ENCODE measurements at regions of chr11 and their contacts with region 1.

Region 1: GRCh38 chr11:82959987-82960778 is 58.6 kb downstream of the DDIAS start:
- DNase-seq: peak in 26 of 35 experiments; percentile 23 to 83 (median 45)
- ATAC-seq: peak; percentile 86 to 89 (median 88)
- H3K4me3 ChIP-seq: peak overlapping the region in 1 of 2 donors; percentile 27
- H3K4me3 Mint-ChIP-seq: peak overlapping the region; percentile 69 to 80 (median 69)
- H3K27ac ChIP-seq: peak overlapping the region; percentile 98
- H3K27ac Mint-ChIP-seq: peak overlapping the region; percentile 92 to 96
- H3K4me1 ChIP-seq: peaks cover 48 to 57% of the 10 kb centered on the region in 2 experiments
- H3K4me1 Mint-ChIP-seq: peaks cover 87 to 91% (median 88%) of the 10 kb centered on the region in 3 donors
- H3K27me3 ChIP-seq: no peaks in the 10 kb centered on the region
- H3K27me3 Mint-ChIP-seq: no peaks in the 10 kb centered on the region

Region 2: GRCh38 chr11:82927254-82927880 is 32.8 kb before region 1 on chr11:
- CTCF ChIA-PET with region 1: interaction called, 4 to 18 read pairs
- POLR2A ChIA-PET with region 1: interaction called, 3 read pairs
- DNase-seq: peak in 19 of 35 experiments; percentile 4 to 80 (median 25)
- ATAC-seq: peak; percentile 82 to 91 (median 88)
- H3K4me3 ChIP-seq: no peak overlapping the region
- H3K4me3 Mint-ChIP-seq: peak overlapping the region in 1 of 3 donors; percentile 31
- H3K27ac ChIP-seq: no peak overlapping the region
- H3K27ac Mint-ChIP-seq: peak overlapping the region; percentile 57 to 61
- H3K4me1 ChIP-seq: peaks cover 6 to 17% of the 10 kb centered on the region in 2 experiments
- H3K4me1 Mint-ChIP-seq: peaks cover 36 to 39% (median 37%) of the 10 kb centered on the region in 3 donors
- H3K27me3 ChIP-seq: no peaks in the 10 kb centered on the region
- H3K27me3 Mint-ChIP-seq: no peaks in the 10 kb centered on the region

Region 3: DNA sequence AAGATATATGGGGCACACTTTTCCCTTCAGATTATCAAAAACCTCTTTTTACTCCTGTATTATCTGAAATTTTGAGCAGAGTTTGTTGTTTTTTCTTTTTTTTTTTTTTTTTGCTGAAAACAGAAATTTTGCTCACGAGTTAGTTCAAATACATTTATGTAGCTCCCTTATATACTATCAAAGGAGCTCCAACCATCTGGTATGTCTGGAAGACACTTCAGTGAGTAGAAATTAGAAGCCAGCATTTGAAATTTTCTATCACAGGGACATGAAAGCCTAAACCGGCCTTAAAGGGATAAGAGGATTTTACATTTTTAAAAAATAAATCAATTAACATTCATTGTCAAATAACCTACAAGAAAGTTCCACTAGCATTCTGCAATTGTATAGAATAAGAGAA is 14.7 kb after region 1 on chr11:
- CTCF ChIA-PET with region 1: no interaction called
- POLR2A ChIA-PET with region 1: interaction called, 3 to 10 read pairs
- DNase-seq: no peak
- ATAC-seq: no peak
- H3K4me3 ChIP-seq: no peak overlapping the region
- H3K4me3 Mint-ChIP-seq: no peak overlapping the region
- H3K27ac ChIP-seq: no peak overlapping the region
- H3K27ac Mint-ChIP-seq: no peak overlapping the region
- H3K4me1 ChIP-seq: peaks cover 4 to 5% of the 10 kb centered on the region in 2 experiments
- H3K4me1 Mint-ChIP-seq: peaks cover 46 to 48% (median 46%) of the 10 kb centered on the region in 3 donors
- H3K27me3 ChIP-seq: no peaks in the 10 kb centered on the region
- H3K27me3 Mint-ChIP-seq: no peaks in the 10 kb centered on the region